Head of caudate nucleus (tissue), 42 donors: ENCODE measurements at regions of chr12 and their contacts with region 1.

Region 1: GRCh38 chr12:32062881-32063280 is 43.8 kb upstream of the BICD1 start:
- DNase-seq: no peak

Region 2: GRCh38 chr12:31813305-31813704 is 249.6 kb before region 1 on chr12:
- intact Hi-C with region 1: no loop called
- DNase-seq: no peak

Region 3: DNA sequence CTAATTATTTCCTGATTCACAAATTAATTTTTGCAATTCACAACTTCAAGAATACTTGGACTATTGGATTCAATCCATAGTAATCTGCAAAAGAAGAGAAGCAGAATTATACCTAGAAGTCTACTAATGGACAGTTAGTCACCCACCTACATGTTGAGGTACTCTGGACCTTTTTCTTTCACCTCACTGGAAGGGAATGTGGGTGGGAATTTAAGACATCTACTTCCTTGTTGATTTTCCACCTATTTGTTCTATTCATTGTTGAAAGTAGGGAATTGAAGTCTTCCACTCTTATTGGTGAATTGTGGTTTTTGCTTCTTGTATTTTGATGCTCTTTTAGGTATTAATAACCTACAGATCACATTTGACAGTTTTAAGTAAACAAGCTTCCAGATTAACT is 92.7 kb before region 1 on chr12:
- intact Hi-C with region 1: no loop called
- DNase-seq: no peak

Region 4: DNA sequence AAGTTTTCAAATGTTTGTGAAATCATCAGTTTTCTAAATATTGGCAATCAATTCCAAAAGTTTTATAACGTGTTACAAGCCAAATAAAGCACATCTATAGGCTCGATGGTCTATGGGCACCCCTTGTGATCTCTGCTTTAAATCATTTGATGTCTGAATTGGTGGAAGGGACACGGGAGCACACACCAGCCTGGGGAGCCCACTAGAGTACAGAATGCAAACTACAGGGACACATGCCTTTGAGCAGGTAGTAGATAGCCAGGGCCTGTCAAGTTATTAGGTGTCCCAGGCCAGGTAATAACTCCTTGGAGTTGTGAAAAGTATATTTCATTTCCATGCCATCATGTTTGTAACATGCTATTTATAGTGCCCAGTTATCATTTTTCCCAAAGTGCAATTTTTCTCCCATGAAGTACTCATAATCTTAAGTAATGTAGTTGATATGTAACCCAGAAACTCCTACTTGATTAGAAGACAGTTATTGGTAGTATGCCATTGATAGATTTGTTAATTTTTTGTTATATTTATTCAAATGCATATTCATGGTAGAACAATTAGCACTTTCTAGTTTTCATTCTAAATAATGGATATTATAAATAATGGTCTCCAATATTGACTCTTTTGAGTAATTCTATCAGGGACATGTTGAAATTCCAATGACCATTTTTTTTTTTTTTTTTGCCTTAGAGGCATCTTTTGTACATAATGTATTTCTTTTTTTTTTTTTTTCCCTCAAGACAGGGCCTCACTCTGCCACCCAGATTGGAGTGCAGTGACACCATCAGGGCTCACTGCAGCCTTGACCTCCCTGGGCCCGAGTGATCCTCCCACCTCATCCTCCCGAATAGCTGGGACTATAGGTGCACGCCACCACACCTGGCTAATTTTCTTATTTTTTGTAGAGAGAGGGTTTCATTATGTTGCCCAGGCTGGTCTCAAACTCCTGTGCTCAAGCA is 239.6 kb after region 1 on chr12:
- intact Hi-C with region 1: loop called (anchors 5 kb)
- DNase-seq: peak in 6 of 42 donors; percentile 4 to 47 (median 20)